ENCODE measurements at regions of chr9 and their contacts with region 1.

Region 1: DNA sequence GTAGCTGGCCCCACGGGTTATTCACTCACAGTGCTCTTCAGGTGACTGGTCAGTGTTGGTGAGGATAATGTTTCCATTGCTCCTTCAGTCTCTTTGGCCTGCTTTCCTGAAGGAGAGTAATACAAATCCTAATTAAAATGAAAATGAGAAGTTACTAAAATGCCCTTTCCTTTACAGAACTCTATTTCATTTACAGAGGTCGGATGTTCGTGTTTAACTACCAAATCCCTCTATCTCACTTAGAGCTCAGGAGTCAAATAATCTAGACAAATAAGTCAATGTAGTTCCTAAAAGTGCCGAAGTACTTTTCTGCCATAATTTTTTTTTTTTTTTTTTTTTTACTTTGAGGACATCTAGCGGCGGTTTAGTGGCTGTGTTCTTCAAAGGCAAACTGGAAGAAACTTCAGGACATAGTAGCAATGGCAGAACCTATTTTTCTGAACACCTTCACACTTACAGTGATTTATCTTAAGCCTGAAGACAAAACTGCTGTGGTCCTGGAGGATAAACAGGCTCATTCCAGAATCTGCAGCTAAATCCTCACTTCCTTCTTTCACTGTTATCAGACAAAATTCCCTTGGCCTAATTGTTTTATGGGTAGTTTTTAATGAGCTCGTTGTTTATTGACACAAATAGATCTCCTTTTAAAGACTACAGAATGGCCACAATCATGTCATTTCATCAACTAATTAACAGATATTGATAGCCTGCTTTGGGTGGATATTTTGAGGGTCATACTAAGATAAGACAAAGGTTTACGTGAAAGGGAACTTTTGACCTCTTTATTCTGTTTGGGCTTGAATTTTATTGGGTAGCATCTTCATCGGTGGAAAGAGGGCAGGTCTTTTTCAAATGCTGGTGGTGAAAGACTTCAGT is 207.6 kb upstream of the DMRTA1 start:
- DNase-seq: peak; percentile 71
- H3K4me3 ChIP-seq: peak overlapping the region in 2 of 3 experiments; percentile 15 to 34
- H3K27ac ChIP-seq: peak overlapping the region; percentile 87
- H3K4me1 ChIP-seq: peaks cover 45% of the 10 kb centered on the region
- H3K27me3 ChIP-seq: no peaks in the 10 kb centered on the region
- CTCF ChIP-seq: peak; percentile 39 to 60

Region 2: GRCh38 chr9:21995177-21996086 is 243.6 kb before region 1 on chr9:
- CTCF ChIA-PET with region 1: no interaction called
- dilution Hi-C with region 1: no loop called
- in situ Hi-C with region 1: loop called in 1 of 2 experiments (anchors 10 kb)
- intact Hi-C with region 1: loop called (anchors 1 kb)
- DNase-seq: peak; percentile 80
- H3K4me3 ChIP-seq: peak overlapping the region; percentile 71 to 98 (median 94)
- H3K27ac ChIP-seq: peak overlapping the region; percentile 96
- H3K4me1 ChIP-seq: peaks cover 19% of the 10 kb centered on the region
- H3K27me3 ChIP-seq: no peaks in the 10 kb centered on the region
- CTCF ChIP-seq: peak in 1 of 2 donors; percentile 46